ENCODE measurements at regions of chrX and their contacts with region 1.

Region 1: DNA sequence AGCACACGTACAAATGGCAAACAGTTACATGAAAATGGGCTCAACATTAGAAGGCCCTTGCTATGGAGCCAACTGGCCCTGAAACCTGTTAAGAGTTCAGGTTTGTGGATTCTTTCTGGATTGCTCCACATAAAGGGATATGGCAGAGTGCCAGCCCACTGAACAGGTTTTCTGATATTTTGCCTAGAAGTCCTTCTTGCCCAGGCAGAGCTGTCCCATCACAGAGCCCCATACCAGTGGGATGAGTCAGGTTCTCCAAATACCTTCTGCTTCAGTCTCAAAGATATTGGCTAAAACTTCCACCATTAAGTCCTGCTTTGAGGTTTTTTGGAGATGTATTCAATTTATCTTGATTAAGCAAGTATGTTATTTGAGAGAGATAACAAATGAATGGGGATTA is 146.8 kb upstream of the IL1RAPL2 start:
- ATAC-seq: no peak
- H3K4me3 ChIP-seq: no peak overlapping the region
- H3K27ac ChIP-seq: no peak overlapping the region
- H3K4me1 ChIP-seq: no peaks in the 10 kb centered on the region

Region 2: GRCh38 chrX:104310090-104310489 is 109.1 kb before region 1 on chrX:
- in situ Hi-C with region 1: loop called in 1 of 9 experiments (anchors 25 kb)
- ATAC-seq: peak; percentile 55 to 88 (median 64)
- H3K4me3 ChIP-seq: no peak overlapping the region
- H3K27ac ChIP-seq: peak overlapping the region in 1 of 2 donors; percentile 26
- H3K4me1 ChIP-seq: peaks cover 9% of the 10 kb centered on the region in 2 donors

Region 3: GRCh38 chrX:104806306-104806855 is 387.2 kb after region 1 on chrX:
- in situ Hi-C with region 1: no loop called
- ATAC-seq: no peak
- H3K4me3 ChIP-seq: no peak overlapping the region
- H3K27ac ChIP-seq: no peak overlapping the region
- H3K4me1 ChIP-seq: no peaks in the 10 kb centered on the region

Region 4: GRCh38 chrX:104929324-104929723 is 510.1 kb after region 1 on chrX:
- in situ Hi-C with region 1: no loop called
- ATAC-seq: no peak
- H3K4me3 ChIP-seq: no peak overlapping the region
- H3K27ac ChIP-seq: no peak overlapping the region
- H3K4me1 ChIP-seq: no peaks in the 10 kb centered on the region

Measured in motor neuron (in vitro differentiated cells).